ENCODE measurements at regions of chr21 and their contacts with region 1.

Region 1: GRCh38 chr21:29164325-29164942 is 34.0 kb downstream of the MAP3K7CL start:
- DNase-seq: no peak
- H3K4me3 ChIP-seq: no peak overlapping the region
- H3K27me3 ChIP-seq: no peaks in the 10 kb centered on the region
- CTCF ChIP-seq: peak; percentile 78

Region 2: GRCh38 chr21:28959367-28960099 is 204.9 kb before region 1 on chr21:
- CTCF ChIA-PET with region 1: no interaction called
- POLR2A ChIA-PET with region 1: no interaction called
- DNase-seq: peak; percentile 31
- H3K4me3 ChIP-seq: no peak overlapping the region
- H3K27me3 ChIP-seq: no peaks in the 10 kb centered on the region
- CTCF ChIP-seq: no peak

Region 3: GRCh38 chr21:29091032-29091431 is 73.4 kb before region 1 on chr21:
- CTCF ChIA-PET with region 1: interaction called, 18 read pairs
- POLR2A ChIA-PET with region 1: no interaction called
- DNase-seq: peak; percentile 61
- H3K4me3 ChIP-seq: no peak overlapping the region
- H3K27me3 ChIP-seq: no peaks in the 10 kb centered on the region
- CTCF ChIP-seq: no peak

Region 4: DNA sequence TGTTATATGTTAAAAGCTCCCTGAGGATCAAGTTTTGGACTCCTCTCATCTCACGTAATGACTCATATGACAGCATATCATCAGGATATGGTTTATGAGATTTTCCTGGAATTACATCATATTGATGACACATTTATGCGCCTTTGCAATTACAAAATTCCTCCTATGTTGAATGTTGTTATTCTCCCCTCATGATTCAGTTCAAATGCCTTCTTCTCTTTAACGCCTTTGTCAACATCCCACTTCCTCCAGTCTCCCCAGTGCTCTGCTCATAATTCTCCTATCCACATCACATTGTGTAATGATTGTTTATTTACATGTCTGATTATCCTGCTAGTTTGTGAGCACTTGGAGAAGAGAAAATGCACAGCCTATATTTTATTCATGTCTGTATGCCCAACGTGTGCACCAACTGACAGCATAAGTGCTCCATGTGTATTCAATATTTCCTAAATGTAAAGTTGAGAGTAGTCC is 53.4 kb after region 1 on chr21:
- CTCF ChIA-PET with region 1: interaction called, 11 read pairs
- POLR2A ChIA-PET with region 1: no interaction called
- DNase-seq: peak; percentile 93
- H3K4me3 ChIP-seq: no peak overlapping the region
- H3K27me3 ChIP-seq: no peaks in the 10 kb centered on the region
- CTCF ChIP-seq: no peak

Region 5: GRCh38 chr21:29298348-29299045 is 134.1 kb after region 1 on chr21 and contains the start of gene BACH1:
- CTCF ChIA-PET with region 1: interaction called, 32 read pairs
- POLR2A ChIA-PET with region 1: no interaction called
- DNase-seq: no peak
- H3K4me3 ChIP-seq: peak within 1 kb of the TSS; percentile 91
- H3K27me3 ChIP-seq: no peaks in the 10 kb centered on the region
- CTCF ChIP-seq: 0 out of 2 replicates have a peak, but pooled peaks have one; percentile 7
- polyA plus RNA-seq, gene BACH1: 22.7 and 37.7 TPM in 2 replicates

Region 6: DNA sequence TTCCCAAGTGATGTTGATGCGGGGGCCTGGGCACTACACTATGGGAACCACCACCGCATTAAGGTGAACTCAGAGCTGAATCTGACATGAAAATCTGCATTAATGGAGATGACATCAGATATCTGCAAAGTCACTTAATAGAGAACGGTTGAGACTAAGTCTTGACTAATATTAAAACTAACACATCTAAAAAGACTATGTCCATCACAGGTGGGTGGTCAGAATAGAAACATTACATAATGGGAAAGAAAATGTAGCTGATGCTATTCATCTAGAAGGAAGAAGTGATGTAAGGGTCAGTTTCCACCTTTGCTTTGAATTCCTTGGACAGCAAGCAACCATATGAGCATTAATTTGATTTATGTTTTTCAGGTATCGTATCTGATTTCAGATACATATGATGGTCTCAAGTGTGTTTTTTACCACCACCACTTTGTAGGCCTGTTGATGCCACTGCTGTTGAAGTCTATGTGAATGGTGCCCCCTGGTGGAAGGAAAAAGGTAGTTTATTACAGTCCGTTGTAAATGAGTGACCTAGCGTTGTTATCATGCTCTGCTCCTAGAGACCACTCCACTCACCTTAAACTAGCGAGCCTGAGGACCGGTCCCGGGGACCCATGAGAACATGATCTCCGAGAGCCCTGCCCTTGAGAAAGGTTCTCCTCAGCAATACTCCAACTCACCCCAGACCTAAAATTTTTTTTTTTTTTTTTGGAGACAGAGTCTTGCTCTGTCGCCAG is 207.8 kb after region 1 on chr21:
- CTCF ChIA-PET with region 1: interaction called, 27 read pairs
- POLR2A ChIA-PET with region 1: no interaction called
- DNase-seq: no peak
- H3K4me3 ChIP-seq: no peak overlapping the region
- H3K27me3 ChIP-seq: no peaks in the 10 kb centered on the region
- CTCF ChIP-seq: peak; percentile 59

Measured in BJ (cell line).